Psoas muscle (tissue), 8 donors: ENCODE measurements at regions of chr15 and their contacts with region 1.

Region 1: GRCh38 chr15:49135893-49136292 is 19.5 kb downstream of the COPS2 start:
- DNase-seq: no peak
- ATAC-seq: no peak
- H3K4me3 ChIP-seq: no peak overlapping the region
- H3K27ac ChIP-seq: no peak overlapping the region
- H3K4me1 ChIP-seq: no peaks in the 10 kb centered on the region
- H3K27me3 ChIP-seq: no peaks in the 10 kb centered on the region
- CTCF ChIP-seq: no peak

Region 2: DNA sequence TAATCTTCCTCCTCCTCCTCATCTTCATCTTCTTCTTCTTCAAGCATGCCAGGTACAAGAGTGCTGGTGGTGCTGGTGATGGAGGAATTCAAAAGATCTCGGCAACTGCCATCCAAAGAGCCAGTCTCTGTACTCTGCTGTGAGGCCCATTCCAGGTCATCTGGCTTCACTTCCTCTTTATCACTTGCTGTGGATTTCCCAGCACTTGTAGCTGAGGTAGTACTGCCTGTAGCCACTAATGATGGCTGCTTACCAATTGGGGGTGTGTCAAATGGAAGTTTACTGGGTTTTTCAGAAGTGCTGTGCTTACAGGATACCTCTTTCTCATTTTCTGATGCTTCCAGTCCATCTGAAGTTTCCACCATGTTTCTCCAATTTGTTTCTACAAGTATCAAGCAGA is 143.3 kb before region 1 on chr15:
- intact Hi-C with region 1: loop called in 1 of 2 experiments (anchors 5 kb)
- DNase-seq: no peak
- ATAC-seq: no peak
- H3K4me3 ChIP-seq: no peak overlapping the region
- H3K27ac ChIP-seq: no peak overlapping the region
- H3K4me1 ChIP-seq: no peaks in the 10 kb centered on the region
- H3K27me3 ChIP-seq: no peaks in the 10 kb centered on the region
- CTCF ChIP-seq: no peak

Region 3: GRCh38 chr15:49023354-49023753 is 112.5 kb before region 1 on chr15:
- intact Hi-C with region 1: loop called in 1 of 2 experiments (anchors 10 kb)
- DNase-seq: no peak
- ATAC-seq: no peak
- H3K4me3 ChIP-seq: no peak overlapping the region
- H3K27ac ChIP-seq: no peak overlapping the region
- H3K4me1 ChIP-seq: no peaks in the 10 kb centered on the region
- H3K27me3 ChIP-seq: no peaks in the 10 kb centered on the region
- CTCF ChIP-seq: no peak

Region 4: GRCh38 chr15:49185473-49185872 is 49.6 kb after region 1 on chr15:
- intact Hi-C with region 1: no loop called
- DNase-seq: no peak
- ATAC-seq: no peak
- H3K4me3 ChIP-seq: no peak overlapping the region
- H3K27ac ChIP-seq: no peak overlapping the region
- H3K4me1 ChIP-seq: no peaks in the 10 kb centered on the region
- H3K27me3 ChIP-seq: no peaks in the 10 kb centered on the region
- CTCF ChIP-seq: no peak